Activated CD8-positive, alpha-beta T cell treated with anti-CD3 and anti-CD28 coated beads, Interleukin-2, amount 10 ng/mL, durations not matched to agents 7 days and 5 days (primary cell): ENCODE measurements at regions of chr2 and their contacts with region 1.

Region 1: DNA sequence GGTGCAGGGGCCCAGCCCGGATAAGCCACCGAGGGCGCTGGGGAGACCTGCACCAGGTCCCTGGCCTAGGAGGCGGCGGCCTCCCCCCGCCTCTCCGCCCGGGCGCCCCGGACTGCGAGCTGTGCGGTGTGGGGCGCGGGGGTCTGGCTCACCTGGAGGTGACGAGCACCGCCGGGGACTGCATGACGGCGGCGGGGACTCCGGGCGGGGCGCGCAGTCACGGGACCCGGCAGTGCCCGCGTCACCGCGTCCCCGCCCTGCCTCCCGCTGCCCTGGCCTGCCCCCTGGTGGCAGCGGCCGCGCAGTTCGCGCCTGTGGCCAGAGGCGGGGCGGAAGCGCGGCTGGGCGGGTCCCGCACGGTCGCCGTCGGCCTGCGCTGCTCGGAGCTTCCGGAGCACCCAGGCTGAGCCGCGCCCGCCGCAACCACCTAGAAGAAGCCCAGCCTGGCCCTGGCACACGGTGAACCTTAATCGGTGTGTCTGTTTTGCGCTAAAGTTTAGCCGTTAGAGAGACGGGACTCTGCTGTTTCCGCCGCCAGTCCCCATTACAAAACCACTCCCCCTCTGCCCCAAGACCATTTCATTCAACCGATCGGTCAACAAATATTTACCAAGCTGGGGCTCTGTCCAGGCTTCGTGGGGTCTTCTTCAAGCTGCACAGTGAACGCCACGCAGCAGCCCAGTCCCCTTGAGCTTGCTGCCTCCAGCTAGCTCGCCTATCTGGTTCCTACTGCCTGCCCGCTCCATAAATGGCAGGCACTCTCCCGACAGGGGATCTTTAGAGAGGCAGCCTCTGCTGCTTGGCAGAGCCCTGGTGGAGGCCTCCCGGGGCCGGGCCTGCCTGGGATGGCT is at the start of gene HS1BP3:
- DNase-seq: peak; percentile 89
- ATAC-seq: peak; percentile 95
- H3K4me3 Mint-ChIP-seq: peak within 1 kb of the TSS; percentile 87
- H3K27ac Mint-ChIP-seq: peak within 1 kb of the TSS; percentile 91
- H3K4me1 Mint-ChIP-seq: peaks cover 19% of the 10 kb centered on the region
- H3K27me3 Mint-ChIP-seq: peaks cover 7% of the 10 kb centered on the region
- total RNA-seq, gene HS1BP3: 10.5 to 11.2 TPM

Region 2: DNA sequence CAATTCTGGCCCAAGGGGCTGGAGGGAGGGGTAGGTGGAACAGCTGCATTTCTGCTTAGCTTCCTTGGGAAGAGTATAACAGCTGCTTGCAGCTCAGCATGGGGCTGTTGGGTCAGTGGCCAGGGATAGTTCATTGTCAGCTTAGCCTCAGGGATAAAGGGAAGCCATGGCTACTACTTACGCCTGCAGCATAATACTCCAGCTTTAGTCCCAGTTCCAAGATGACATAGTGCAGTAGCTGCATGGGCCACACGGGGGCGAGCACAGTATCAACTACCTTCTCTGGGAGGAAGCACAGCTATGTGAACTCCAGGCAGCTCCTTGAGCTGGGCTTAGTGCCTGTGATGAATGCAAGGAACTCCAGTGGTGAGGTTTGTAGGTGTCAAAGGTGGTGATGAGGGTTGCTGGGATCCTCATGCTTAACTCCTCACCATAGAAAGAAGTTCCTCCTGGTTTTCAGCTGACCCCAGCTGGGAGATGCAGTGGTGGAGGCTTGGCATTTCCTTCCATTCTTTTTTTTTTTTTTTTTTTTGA is 239.7 kb before region 1 on chr2:
- CTCF ChIA-PET with region 1: interaction called, 38 read pairs
- POLR2A ChIA-PET with region 1: no interaction called
- DNase-seq: peak; percentile 79
- ATAC-seq: peak; percentile 98
- H3K4me3 Mint-ChIP-seq: no peak overlapping the region
- H3K27ac Mint-ChIP-seq: no peak overlapping the region
- H3K4me1 Mint-ChIP-seq: no peaks in the 10 kb centered on the region
- H3K27me3 Mint-ChIP-seq: peaks cover 33% of the 10 kb centered on the region

Region 3: DNA sequence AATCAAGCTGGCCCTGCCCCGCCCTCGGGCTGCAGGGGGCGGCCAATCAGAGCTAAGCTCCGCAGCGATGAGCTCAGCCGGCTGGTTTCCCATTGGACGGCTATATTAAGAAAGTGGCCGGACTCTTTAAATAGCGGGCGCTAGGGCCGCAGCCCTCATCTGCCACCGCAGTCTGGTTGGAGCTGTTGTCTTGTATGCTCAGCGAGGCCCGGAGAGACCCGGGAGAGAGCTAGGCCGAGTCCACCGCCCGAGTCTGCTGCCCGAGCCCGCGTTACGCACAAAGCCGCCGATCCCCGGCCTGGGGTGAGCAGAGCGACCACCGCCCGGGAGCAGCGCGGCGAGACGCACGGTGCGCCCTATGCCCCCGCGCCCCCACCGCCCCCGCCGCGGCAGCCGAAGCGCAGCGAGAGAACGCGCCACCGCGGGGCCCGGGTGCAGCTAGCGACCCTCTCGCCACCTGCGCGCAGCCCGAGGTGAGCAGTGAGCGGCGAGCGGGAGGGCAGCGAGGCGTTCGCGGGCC is 204.1 kb before region 1 on chr2 and contains the start of gene RHOB:
- CTCF ChIA-PET with region 1: interaction called, 37 read pairs
- POLR2A ChIA-PET with region 1: interaction called, 15 read pairs
- DNase-seq: peak; percentile 91
- ATAC-seq: peak; percentile 98
- H3K4me3 Mint-ChIP-seq: peak within 1 kb of the TSS; percentile 63
- H3K27ac Mint-ChIP-seq: peak within 1 kb of the TSS; percentile 43
- H3K4me1 Mint-ChIP-seq: peaks cover 4% of the 10 kb centered on the region
- H3K27me3 Mint-ChIP-seq: peaks cover 39% of the 10 kb centered on the region
- total RNA-seq, gene RHOB: 1.2 to 1.3 TPM

Region 4: DNA sequence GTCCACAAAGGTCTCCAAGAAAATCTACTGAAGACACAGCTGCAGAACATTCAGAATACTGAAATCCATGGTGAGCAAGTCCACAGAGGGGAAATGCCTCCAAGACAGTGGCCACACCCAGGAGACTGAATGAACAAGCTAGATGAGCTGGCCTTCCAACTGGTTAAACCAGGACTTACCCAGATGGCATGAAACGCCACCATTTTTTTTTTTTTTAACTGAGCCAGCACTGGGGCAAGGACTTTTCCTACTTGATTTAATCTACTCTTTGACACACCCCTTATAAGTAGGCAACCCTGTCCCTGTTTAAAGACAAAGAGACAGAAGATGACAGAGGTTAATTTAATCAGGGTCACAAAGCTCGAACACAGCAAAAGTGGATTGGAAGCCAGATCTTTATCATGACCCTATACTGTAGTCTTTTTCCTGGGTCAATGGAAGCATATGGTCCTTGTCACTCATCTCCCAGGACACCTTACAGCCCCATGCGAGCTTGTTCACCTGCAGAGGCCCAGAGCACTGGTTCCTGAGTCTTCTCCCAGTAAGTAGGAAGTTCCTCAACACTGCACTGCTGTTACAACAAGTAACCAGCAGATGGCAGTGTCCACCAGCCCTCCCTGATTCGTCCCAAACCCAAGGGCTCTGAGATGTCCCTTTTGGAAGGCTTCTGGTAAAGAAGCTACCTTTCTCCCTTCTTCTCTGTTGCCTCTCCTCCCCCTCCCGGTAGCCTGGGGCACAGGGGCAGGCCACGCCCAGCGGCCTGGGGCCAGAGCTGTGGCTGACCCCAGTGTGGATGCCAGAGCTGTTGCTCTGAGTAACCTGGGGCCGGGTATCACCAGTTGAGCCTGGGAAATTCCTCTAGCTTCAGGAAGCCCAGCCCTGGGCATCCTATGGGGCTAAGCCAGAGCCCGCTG is 10.2 kb after region 1 on chr2:
- CTCF ChIA-PET with region 1: interaction called, 57 read pairs
- POLR2A ChIA-PET with region 1: interaction called, 7 read pairs
- DNase-seq: peak; percentile 76
- ATAC-seq: peak; percentile 62
- H3K4me3 Mint-ChIP-seq: no peak overlapping the region
- H3K27ac Mint-ChIP-seq: no peak overlapping the region
- H3K4me1 Mint-ChIP-seq: peaks cover 9% of the 10 kb centered on the region
- H3K27me3 Mint-ChIP-seq: peaks cover 55% of the 10 kb centered on the region